Mammary epithelial cell (primary cell): ENCODE measurements at regions of chr12 and their contacts with region 1.

Region 1: DNA sequence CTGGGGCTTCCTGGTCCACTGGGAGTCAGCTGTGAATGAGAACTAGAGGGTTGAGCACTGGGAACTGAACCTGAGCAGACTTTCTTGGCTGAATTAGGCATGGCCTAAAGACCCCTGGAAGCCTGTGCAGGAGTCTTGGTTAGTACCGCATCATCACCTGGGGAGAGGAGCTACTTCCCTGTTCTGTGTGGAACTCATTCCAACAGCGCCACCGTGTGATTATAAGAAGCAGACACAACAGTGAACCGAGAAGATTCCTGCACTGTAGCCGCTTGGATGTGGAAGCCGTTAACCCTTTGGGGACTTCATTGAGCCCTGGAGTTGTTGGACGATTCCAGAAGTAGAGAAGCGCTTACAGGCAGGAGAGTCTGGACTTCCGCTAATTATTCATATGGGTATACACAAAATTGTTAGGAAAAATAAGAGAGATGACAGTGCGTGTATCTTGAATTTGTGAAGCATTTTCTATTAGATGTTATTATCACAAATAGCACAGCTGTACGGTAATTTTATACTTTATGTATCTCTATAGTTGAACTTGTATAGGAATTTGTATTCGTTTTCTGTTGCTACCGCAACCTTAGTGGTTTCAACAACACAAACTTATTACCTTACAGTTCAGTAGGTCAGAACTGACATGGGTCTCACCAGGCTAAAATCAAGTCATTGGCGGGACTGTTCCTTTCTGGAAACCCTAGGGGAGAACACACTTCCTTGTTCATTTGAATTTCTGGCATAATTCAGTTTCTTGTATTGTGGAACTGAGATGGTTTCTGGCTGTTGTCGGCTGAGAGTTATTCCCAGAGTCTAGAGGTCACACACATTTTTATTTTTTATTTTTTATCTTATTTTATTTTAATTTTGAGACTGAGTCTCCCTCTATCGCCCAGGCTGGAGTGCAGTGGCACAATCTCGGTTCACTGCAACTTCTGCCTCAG is 100.7 kb downstream of the C2CD5 start:
- DNase-seq: peak; percentile 71
- H3K4me3 ChIP-seq: no peak overlapping the region
- H3K27ac ChIP-seq: no peak overlapping the region
- H3K4me1 ChIP-seq: no peaks in the 10 kb centered on the region
- H3K27me3 ChIP-seq: no peaks in the 10 kb centered on the region
- CTCF ChIP-seq: peak; percentile 81 to 84

Region 2: GRCh38 chr12:21697904-21698630 is 745.6 kb before region 1 on chr12:
- CTCF ChIA-PET with region 1: interaction called, 7 read pairs
- dilution Hi-C with region 1: no loop called
- in situ Hi-C with region 1: no loop called
- intact Hi-C with region 1: loop called (anchors 10 kb)
- DNase-seq: peak; percentile 6
- H3K4me3 ChIP-seq: no peak overlapping the region
- H3K27ac ChIP-seq: no peak overlapping the region
- H3K4me1 ChIP-seq: no peaks in the 10 kb centered on the region
- H3K27me3 ChIP-seq: no peaks in the 10 kb centered on the region
- CTCF ChIP-seq: peak; percentile 48 to 54

Region 3: GRCh38 chr12:22083167-22083566 is 360.5 kb before region 1 on chr12:
- CTCF ChIA-PET with region 1: no interaction called
- dilution Hi-C with region 1: no loop called
- in situ Hi-C with region 1: loop called (anchors 10 kb)
- intact Hi-C with region 1: loop called (anchors 1 kb)
- DNase-seq: peak; percentile 30
- H3K4me3 ChIP-seq: no peak overlapping the region
- H3K27ac ChIP-seq: no peak overlapping the region
- H3K4me1 ChIP-seq: no peaks in the 10 kb centered on the region
- H3K27me3 ChIP-seq: no peaks in the 10 kb centered on the region
- CTCF ChIP-seq: peak in 1 of 2 donors; percentile 57

Region 4: GRCh38 chr12:22190969-22191368 is 252.7 kb before region 1 on chr12:
- CTCF ChIA-PET with region 1: no interaction called
- dilution Hi-C with region 1: no loop called
- in situ Hi-C with region 1: no loop called
- intact Hi-C with region 1: loop called (anchors 1 kb)
- DNase-seq: no peak
- H3K4me3 ChIP-seq: no peak overlapping the region
- H3K27ac ChIP-seq: no peak overlapping the region
- H3K4me1 ChIP-seq: no peaks in the 10 kb centered on the region
- H3K27me3 ChIP-seq: no peaks in the 10 kb centered on the region
- CTCF ChIP-seq: peak in 1 of 2 donors; percentile 22

Region 5: GRCh38 chr12:22377731-22378496 is 65.7 kb before region 1 on chr12:
- CTCF ChIA-PET with region 1: no interaction called
- dilution Hi-C with region 1: no loop called
- in situ Hi-C with region 1: no loop called
- intact Hi-C with region 1: no loop called
- DNase-seq: no peak
- H3K4me3 ChIP-seq: no peak overlapping the region
- H3K27ac ChIP-seq: no peak overlapping the region
- H3K4me1 ChIP-seq: no peaks in the 10 kb centered on the region
- H3K27me3 ChIP-seq: no peaks in the 10 kb centered on the region
- CTCF ChIP-seq: no peak